CD8-positive, alpha-beta T cell (primary cell): ENCODE measurements at regions of chr3 and their contacts with region 1.

Region 1: GRCh38 chr3:14178247-14179113 is at the starts of genes LSM3 and XPC:
- DNase-seq: peak; percentile 96 to 99 (median 98)
- ATAC-seq: peak; percentile 94
- H3K4me3 ChIP-seq: peak within 1 kb of the TSS; percentile 68
- H3K4me3 Mint-ChIP-seq: peak within 1 kb of the TSS; percentile 96
- H3K27ac ChIP-seq: peak within 1 kb of the TSS; percentile 91 to 99
- H3K27ac Mint-ChIP-seq: peak within 1 kb of the TSS; percentile 99
- H3K4me1 ChIP-seq: peaks cover 49% of the 10 kb centered on the region
- H3K4me1 Mint-ChIP-seq: peaks cover 78% of the 10 kb centered on the region
- H3K27me3 ChIP-seq: no peaks in the 10 kb centered on the region
- H3K27me3 Mint-ChIP-seq: no peaks in the 10 kb centered on the region
- CTCF ChIP-seq: no peak
- total RNA-seq, gene LSM3: 7.5 to 8.3 TPM
- total RNA-seq, gene XPC: 51.5 to 56.5 TPM

Region 2: DNA sequence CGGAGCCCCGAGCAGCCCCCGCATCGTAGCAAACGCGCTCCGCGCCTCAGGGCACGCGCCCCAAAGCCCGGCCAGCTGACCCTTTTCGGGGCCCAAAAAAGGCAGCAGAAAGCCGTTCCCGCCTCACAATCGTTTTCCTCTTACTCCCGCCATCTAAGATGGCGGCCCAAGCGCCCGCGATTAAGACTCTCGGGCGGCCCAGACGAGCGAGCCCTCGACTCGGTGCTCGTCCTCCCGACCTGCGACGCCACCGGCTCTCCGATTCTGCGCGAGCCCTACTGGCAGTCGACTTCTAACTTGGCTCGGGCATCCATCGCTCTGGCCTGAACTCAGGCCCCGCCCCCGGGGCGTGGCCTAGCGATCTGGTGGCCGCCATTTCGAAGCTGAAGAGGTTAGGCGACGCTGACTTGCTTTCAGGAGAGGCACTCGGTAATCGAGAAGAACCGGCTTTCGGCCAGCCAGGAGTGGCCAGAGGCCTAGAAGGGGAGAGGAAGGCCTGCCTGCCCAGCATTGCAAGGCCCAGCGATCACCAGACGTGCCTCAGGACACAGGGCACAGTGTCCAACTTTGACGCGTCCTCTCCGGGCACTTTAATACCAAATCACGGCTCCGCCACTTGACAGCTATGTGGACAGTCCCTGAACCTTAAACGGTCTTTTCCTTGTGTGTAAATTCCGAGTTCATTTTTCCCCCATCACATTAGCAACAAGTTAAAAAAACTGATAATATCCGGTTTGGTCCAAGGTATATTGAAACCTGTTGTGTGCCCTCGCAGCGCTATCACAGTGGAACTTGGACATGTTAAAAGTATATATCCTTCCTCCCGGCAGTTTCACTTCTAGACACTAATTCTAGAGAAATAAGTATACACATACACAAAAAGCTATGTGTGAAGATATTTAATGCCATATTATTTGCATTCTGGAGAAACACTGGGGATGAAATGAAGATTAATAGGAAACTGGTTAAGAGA is 1514.3 kb before region 1 on chr3 and contains the start of gene RAF1:
- CTCF ChIA-PET with region 1: no interaction called
- POLR2A ChIA-PET with region 1: no interaction called
- intact Hi-C with region 1: loop called in 1 of 2 experiments (anchors 10 kb)
- DNase-seq: peak; percentile 94 to 99 (median 97)
- ATAC-seq: peak; percentile 93
- H3K4me3 ChIP-seq: peak within 1 kb of the TSS; percentile 83 to 93
- H3K4me3 Mint-ChIP-seq: peak within 1 kb of the TSS; percentile 90
- H3K27ac ChIP-seq: peak within 1 kb of the TSS; percentile 96 to 99
- H3K27ac Mint-ChIP-seq: peak within 1 kb of the TSS; percentile 99
- H3K4me1 ChIP-seq: peaks cover 30% of the 10 kb centered on the region
- H3K4me1 Mint-ChIP-seq: peaks cover 34% of the 10 kb centered on the region
- H3K27me3 ChIP-seq: no peaks in the 10 kb centered on the region
- H3K27me3 Mint-ChIP-seq: no peaks in the 10 kb centered on the region
- CTCF ChIP-seq: no peak
- total RNA-seq, gene RAF1: 156 to 159 TPM

Region 3: GRCh38 chr3:13479581-13480339 is 698.7 kb before region 1 on chr3 and contains the start of gene HDAC11:
- CTCF ChIA-PET with region 1: no interaction called
- POLR2A ChIA-PET with region 1: interaction called, 3 read pairs
- intact Hi-C with region 1: loop called in 1 of 2 experiments (anchors 5 kb)
- DNase-seq: peak; percentile 95 to 99 (median 98)
- ATAC-seq: peak; percentile 93
- H3K4me3 ChIP-seq: peak within 1 kb of the TSS; percentile 83 to 96
- H3K4me3 Mint-ChIP-seq: peak within 1 kb of the TSS; percentile 95
- H3K27ac ChIP-seq: peak within 1 kb of the TSS; percentile 90
- H3K27ac Mint-ChIP-seq: peak within 1 kb of the TSS; percentile 96
- H3K4me1 ChIP-seq: peaks cover 18% of the 10 kb centered on the region
- H3K4me1 Mint-ChIP-seq: peaks cover 17% of the 10 kb centered on the region
- H3K27me3 ChIP-seq: no peaks in the 10 kb centered on the region
- H3K27me3 Mint-ChIP-seq: no peaks in the 10 kb centered on the region
- CTCF ChIP-seq: no peak
- total RNA-seq, gene HDAC11: 4.6 to 5.8 TPM

Region 4: DNA sequence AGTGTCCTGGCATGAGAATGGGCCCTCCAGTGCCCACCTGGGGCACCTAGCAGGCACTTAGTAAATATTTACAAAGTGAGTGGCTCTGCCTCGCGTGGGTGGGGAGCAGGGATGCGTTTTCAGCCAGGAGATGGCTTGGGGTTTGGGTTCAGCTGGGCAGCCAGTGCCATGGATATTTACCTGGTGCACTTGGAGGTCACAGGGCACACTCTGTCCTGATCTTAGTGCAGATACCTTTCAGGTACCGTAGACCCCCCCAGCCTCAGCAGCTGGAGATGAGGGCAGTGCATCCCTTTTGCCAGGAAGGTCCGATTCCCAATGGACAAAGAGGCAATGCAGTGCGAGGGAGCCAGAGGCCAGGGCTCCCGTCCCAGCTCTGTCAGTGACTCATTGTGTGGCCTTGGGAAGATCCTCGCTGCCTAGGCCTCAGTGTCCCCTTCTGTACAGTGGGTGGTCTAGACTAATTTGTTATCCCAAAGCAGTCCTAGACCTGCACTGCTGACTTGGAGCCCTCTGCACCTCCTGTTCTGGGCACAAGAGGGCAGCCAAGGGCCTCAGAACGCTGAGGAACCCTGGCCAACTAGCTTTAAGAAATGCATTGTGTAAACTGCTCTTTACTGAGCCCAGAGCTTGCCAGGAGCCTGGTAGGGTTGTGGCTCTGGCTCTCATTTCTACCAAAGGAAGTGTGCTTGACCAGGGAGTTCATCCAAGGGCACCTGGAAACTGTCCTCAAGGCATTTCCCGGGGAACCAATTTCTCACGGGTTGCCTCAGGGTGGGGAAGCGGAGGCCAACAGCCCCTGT is 682.4 kb before region 1 on chr3:
- CTCF ChIA-PET with region 1: no interaction called
- POLR2A ChIA-PET with region 1: no interaction called
- intact Hi-C with region 1: no loop called
- DNase-seq: peak; percentile 51 to 81 (median 68)
- ATAC-seq: peak; percentile 99
- H3K4me3 ChIP-seq: no peak overlapping the region
- H3K4me3 Mint-ChIP-seq: no peak overlapping the region
- H3K27ac ChIP-seq: no peak overlapping the region
- H3K27ac Mint-ChIP-seq: no peak overlapping the region
- H3K4me1 ChIP-seq: no peaks in the 10 kb centered on the region
- H3K4me1 Mint-ChIP-seq: no peaks in the 10 kb centered on the region
- H3K27me3 ChIP-seq: no peaks in the 10 kb centered on the region
- H3K27me3 Mint-ChIP-seq: no peaks in the 10 kb centered on the region
- CTCF ChIP-seq: peak; percentile 76

Region 5: DNA sequence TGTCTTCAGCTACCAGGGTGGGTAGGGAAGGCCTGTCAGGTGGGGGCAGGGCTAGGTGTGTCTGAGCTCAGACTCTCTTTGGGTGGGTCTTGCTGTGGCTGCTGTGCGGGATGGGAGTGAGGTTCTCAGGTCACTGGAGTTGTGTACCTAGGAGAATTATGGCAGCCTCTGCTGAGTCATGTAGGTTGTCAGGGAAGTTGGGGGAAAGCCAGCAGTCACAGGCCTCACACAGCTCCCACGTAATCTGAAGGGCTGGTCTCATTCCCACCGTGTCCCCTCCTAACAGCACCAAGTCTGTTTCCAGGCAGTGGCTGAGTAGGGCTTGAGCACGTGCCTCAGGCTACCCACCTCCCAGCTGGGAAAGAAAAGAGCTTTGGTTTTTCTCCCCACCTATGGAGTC is 120.8 kb before region 1 on chr3:
- CTCF ChIA-PET with region 1: no interaction called
- POLR2A ChIA-PET with region 1: no interaction called
- intact Hi-C with region 1: no loop called
- DNase-seq: no peak
- ATAC-seq: no peak
- H3K4me3 ChIP-seq: no peak overlapping the region
- H3K4me3 Mint-ChIP-seq: no peak overlapping the region
- H3K27ac ChIP-seq: no peak overlapping the region
- H3K27ac Mint-ChIP-seq: no peak overlapping the region
- H3K4me1 ChIP-seq: no peaks in the 10 kb centered on the region
- H3K4me1 Mint-ChIP-seq: no peaks in the 10 kb centered on the region
- H3K27me3 ChIP-seq: no peaks in the 10 kb centered on the region
- H3K27me3 Mint-ChIP-seq: peaks cover 4% of the 10 kb centered on the region
- CTCF ChIP-seq: no peak

Region 6: DNA sequence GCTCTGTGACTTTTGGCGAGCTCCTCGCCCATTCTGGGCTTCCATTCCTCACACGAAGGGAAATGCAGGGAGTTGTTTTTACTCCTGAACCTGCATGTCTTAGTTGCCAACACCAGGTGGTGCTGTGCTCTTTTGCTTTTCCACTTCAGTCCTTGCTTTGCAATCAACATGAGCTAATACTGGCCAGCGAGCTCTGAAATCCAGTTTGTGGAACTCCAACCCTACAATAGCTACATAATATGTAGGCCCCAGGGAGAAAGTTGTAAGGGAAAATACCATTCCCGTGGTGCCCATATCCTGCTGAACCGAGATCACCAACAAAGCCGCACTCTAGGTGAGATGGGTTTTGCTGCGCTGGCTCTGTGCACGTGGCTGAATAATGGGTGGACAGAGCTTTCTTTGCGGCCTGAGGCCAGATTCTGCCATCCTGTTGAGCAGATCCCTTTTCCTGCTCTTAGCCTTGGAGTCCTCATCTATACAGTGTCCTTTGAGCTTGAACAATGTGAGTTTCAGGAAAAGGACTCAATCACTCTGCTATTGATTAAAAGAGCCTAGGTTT is 25.1 kb after region 1 on chr3:
- CTCF ChIA-PET with region 1: interaction called, 15 read pairs
- POLR2A ChIA-PET with region 1: interaction called, 4 read pairs
- intact Hi-C with region 1: no loop called
- DNase-seq: peak in 8 of 9 experiments; percentile 8 to 68 (median 39)
- ATAC-seq: peak; percentile 62
- H3K4me3 ChIP-seq: no peak overlapping the region
- H3K4me3 Mint-ChIP-seq: no peak overlapping the region
- H3K27ac ChIP-seq: no peak overlapping the region
- H3K27ac Mint-ChIP-seq: no peak overlapping the region
- H3K4me1 ChIP-seq: no peaks in the 10 kb centered on the region
- H3K4me1 Mint-ChIP-seq: no peaks in the 10 kb centered on the region
- H3K27me3 ChIP-seq: no peaks in the 10 kb centered on the region
- H3K27me3 Mint-ChIP-seq: no peaks in the 10 kb centered on the region
- CTCF ChIP-seq: peak; percentile 66

Region 7: DNA sequence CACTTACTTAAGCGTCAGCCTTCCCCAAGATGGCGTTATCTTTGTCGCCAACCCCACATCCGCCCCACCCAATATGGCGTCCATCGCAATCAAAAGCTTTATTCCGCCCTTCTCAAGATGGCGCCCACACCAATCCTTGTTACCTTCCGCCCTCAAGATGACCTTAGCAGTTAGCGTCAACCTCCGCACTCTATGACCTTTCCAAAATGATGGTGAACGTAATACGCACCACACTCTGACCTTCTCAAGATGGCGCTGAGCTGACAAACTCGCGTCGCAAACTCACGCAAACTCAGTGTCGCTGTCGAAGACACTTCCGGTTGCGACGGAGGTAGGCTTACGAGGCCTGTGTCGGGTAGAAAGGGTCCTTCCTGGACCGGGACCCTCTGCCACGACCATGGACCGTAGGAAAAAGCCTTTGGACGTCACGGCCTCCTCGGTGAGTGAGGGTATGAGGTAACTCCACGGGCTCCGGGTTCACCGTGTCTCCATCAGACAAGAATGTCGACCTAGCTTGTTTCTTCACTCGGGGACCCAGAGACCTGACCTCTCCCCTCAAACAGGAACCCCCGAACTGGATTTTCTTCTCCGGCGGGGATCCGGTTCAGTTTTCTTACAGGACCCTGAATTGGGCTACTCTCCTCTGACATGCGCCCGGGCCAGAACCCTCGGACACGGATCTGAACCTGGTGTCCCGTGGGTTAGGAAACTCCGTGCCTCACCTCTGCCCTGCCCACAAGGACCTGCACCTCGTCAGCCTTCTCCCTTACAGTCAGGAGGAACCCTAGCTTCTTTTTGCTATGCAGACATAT is 473.2 kb after region 1 on chr3 and contains the start of gene CCDC174:
- CTCF ChIA-PET with region 1: no interaction called
- POLR2A ChIA-PET with region 1: interaction called, 32 read pairs
- intact Hi-C with region 1: loop called (anchors 1 kb)
- DNase-seq: peak; percentile 89 to 100 (median 93)
- ATAC-seq: peak; percentile 97
- H3K4me3 ChIP-seq: peak within 1 kb of the TSS; percentile 74 to 85
- H3K4me3 Mint-ChIP-seq: peak within 1 kb of the TSS; percentile 98
- H3K27ac ChIP-seq: peak within 1 kb of the TSS; percentile 95 to 97
- H3K27ac Mint-ChIP-seq: peak within 1 kb of the TSS; percentile 99
- H3K4me1 ChIP-seq: peaks cover 31% of the 10 kb centered on the region
- H3K4me1 Mint-ChIP-seq: peaks cover 60% of the 10 kb centered on the region
- H3K27me3 ChIP-seq: no peaks in the 10 kb centered on the region
- H3K27me3 Mint-ChIP-seq: no peaks in the 10 kb centered on the region
- CTCF ChIP-seq: no peak
- total RNA-seq, gene CCDC174: 48.8 to 50.9 TPM

Region 8: DNA sequence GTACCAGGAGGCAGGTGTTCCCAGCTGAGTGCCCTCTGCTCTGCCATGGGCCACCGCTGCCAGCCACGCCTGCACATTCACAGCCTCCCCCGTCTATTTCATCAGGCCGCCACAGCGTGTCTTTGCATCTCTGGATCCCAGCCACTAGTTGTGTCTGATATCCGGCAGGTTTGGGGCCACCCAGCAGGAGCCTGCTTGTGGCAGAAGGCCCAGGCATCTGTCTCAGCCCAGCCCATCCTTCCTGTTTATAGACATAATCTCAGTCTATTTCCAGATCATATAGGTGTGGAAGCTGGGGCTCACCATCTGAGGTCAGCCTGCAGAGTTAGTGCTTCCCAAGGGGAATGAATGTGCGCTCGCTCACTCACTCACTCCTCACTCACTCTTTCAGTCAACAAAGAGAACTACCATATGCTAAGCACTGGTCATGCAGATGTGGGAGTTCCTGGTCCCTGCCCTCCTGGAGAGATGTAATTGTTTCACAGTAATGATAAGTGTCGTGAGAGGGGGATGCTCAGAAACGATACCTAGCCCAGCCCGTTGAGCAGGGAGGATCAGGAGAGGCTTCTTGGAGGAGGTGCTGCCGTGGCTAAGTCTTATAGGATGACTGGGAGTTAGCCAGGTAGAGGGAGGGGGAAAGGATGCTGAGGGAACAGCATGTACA is 700.9 kb after region 1 on chr3:
- CTCF ChIA-PET with region 1: no interaction called
- POLR2A ChIA-PET with region 1: no interaction called
- intact Hi-C with region 1: no loop called
- DNase-seq: peak; percentile 5 to 68 (median 31)
- ATAC-seq: peak; percentile 49
- H3K4me3 ChIP-seq: no peak overlapping the region
- H3K4me3 Mint-ChIP-seq: no peak overlapping the region
- H3K27ac ChIP-seq: no peak overlapping the region
- H3K27ac Mint-ChIP-seq: no peak overlapping the region
- H3K4me1 ChIP-seq: peaks cover 56% of the 10 kb centered on the region
- H3K4me1 Mint-ChIP-seq: peaks cover 46% of the 10 kb centered on the region
- H3K27me3 ChIP-seq: no peaks in the 10 kb centered on the region
- H3K27me3 Mint-ChIP-seq: no peaks in the 10 kb centered on the region
- CTCF ChIP-seq: no peak

Region 9: GRCh38 chr3:15098503-15099363 is 920.3 kb after region 1 on chr3 and contains the start of gene RBSN:
- CTCF ChIA-PET with region 1: no interaction called
- POLR2A ChIA-PET with region 1: interaction called, 3 read pairs
- intact Hi-C with region 1: loop called in 1 of 2 experiments (anchors 10 kb)
- DNase-seq: peak; percentile 87 to 98 (median 94)
- ATAC-seq: peak; percentile 76
- H3K4me3 ChIP-seq: peak within 1 kb of the TSS; percentile 71 to 76
- H3K4me3 Mint-ChIP-seq: peak within 1 kb of the TSS; percentile 88
- H3K27ac ChIP-seq: peak within 1 kb of the TSS; percentile 96 to 98
- H3K27ac Mint-ChIP-seq: peak within 1 kb of the TSS; percentile 95
- H3K4me1 ChIP-seq: peaks cover 16% of the 10 kb centered on the region
- H3K4me1 Mint-ChIP-seq: peaks cover 31% of the 10 kb centered on the region
- H3K27me3 ChIP-seq: no peaks in the 10 kb centered on the region
- H3K27me3 Mint-ChIP-seq: no peaks in the 10 kb centered on the region
- CTCF ChIP-seq: no peak
- total RNA-seq, gene RBSN: 41.9 to 48.1 TPM

Region 10: DNA sequence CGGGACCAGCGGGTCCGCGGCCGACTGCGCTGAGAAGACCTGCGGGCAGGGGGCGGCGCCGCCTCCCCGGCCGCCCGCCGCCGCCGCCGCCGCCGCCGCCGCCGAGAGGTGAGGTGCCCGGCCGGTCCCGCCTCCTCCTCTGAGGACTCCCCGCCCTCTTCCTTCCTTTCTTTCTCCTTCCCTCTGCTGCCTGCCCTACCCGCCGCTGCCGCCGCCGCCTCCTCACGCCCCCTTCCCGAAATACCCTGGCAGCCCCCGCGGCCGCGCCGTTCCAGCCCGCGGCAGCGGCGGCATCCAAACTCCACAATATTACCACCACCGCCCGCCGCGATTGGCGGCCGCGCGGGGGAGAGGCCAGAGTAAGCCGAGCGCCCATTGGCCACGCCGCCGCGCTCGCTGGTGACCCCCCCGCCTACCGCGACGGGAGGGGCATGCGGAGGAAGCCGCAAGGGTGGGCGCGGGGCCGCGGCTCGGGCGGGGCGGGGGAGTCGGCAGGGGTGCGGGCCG is 1681.1 kb after region 1 on chr3:
- CTCF ChIA-PET with region 1: no interaction called
- POLR2A ChIA-PET with region 1: no interaction called
- intact Hi-C with region 1: loop called in 1 of 2 experiments (anchors 5 kb)
- DNase-seq: peak; percentile 42 to 88 (median 73)
- ATAC-seq: peak; percentile 78
- H3K4me3 ChIP-seq: peak overlapping the region; percentile 73 to 86
- H3K4me3 Mint-ChIP-seq: peak overlapping the region; percentile 97
- H3K27ac ChIP-seq: peak overlapping the region in 1 of 2 experiments; percentile 46
- H3K27ac Mint-ChIP-seq: peak overlapping the region; percentile 95
- H3K4me1 ChIP-seq: peaks cover 20% of the 10 kb centered on the region
- H3K4me1 Mint-ChIP-seq: peaks cover 35% of the 10 kb centered on the region
- H3K27me3 ChIP-seq: no peaks in the 10 kb centered on the region
- H3K27me3 Mint-ChIP-seq: no peaks in the 10 kb centered on the region
- CTCF ChIP-seq: no peak